IMR-90 (cell line): ENCODE measurements at regions of chr6 and their contacts with region 1.

Region 1: GRCh38 chr6:26045065-26045927 is 41.9 kb upstream of the HFE start:
- DNase-seq: peak; percentile 94
- ATAC-seq: peak; percentile 73
- H3K4me3 ChIP-seq: peak overlapping the region; percentile 63
- H3K27ac ChIP-seq: peak overlapping the region; percentile 51
- H3K4me1 ChIP-seq: no peaks in the 10 kb centered on the region; the same call in 1 of the 2 replicates
- H3K27me3 ChIP-seq: no peaks in the 10 kb centered on the region
- CTCF ChIP-seq: peak; percentile 21; the same call in 1 of the 2 replicates
- POLR2A ChIP-seq: peak; percentile 98
- RAD21 ChIP-seq: no peak

Region 2: GRCh38 chr6:26003102-26003694 is 42.1 kb before region 1 on chr6:
- CTCF ChIA-PET with region 1: no interaction called
- POLR2A ChIA-PET with region 1: no interaction called
- dilution Hi-C with region 1: no loop called
- in situ Hi-C with region 1: no loop called
- intact Hi-C with region 1: no loop called
- DNase-seq: peak; percentile 56
- ATAC-seq: peak; percentile 84
- H3K4me3 ChIP-seq: no peak overlapping the region
- H3K27ac ChIP-seq: no peak overlapping the region
- H3K4me1 ChIP-seq: 0 out of 2 replicates have a peak, but pooled peaks cover 1% of the 10 kb centered on the region
- H3K27me3 ChIP-seq: no peaks in the 10 kb centered on the region
- CTCF ChIP-seq: peak; percentile 78
- POLR2A ChIP-seq: no peak
- RAD21 ChIP-seq: peak; percentile 79

Region 3: DNA sequence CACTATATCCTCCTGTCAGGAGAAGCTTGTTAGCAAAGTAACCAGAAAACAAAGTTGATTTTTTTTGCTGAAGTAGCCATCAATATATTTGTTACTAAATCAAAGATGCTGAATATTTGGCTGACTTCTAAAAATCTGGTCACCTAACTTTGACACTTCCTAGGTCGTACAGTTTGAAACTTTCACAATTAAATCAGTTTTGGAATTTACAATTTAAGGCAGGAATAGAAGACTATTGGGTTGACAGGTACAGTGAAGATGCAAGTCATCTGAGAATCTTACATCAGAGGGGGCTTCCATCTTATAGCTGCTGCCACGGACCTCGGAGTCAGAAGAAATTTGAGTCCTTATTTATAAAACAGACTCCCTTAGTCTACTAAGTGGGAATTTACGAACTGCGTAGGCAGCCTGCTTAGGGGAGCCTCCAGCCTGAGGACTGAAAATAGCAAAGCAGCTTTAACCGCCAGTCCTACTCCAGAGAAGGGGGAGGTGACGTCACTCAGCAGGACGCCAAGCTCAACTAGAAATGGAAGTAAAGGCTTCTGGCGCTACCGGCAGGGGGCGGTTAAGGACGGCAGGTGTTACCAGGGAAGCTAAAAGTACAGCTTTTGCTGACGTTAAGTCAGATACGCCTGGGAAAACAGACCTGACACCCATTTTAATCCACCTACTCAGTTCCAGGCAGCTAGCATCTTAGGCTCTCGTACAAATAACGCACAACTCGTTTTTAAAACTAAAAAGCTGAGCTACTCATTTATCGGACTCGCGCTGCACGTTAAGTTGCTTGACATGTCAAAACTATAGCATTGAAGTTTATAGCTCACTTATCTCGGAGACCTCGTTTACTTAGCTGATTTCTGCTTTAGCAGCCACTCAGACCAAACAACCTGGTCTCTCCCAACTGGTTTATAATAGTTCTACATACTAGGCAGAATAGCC is 19.1 kb before region 1 on chr6:
- CTCF ChIA-PET with region 1: interaction called, 13 read pairs
- POLR2A ChIA-PET with region 1: interaction called, 20 read pairs
- dilution Hi-C with region 1: no loop called
- in situ Hi-C with region 1: no loop called
- intact Hi-C with region 1: no loop called
- DNase-seq: peak; percentile 99
- ATAC-seq: peak; percentile 41
- H3K4me3 ChIP-seq: peak overlapping the region; percentile 68; the same call in 1 of the 2 replicates
- H3K27ac ChIP-seq: peak overlapping the region; percentile 59
- H3K4me1 ChIP-seq: peaks cover 4% of the 10 kb centered on the region
- H3K27me3 ChIP-seq: no peaks in the 10 kb centered on the region
- CTCF ChIP-seq: peak; percentile 96
- POLR2A ChIP-seq: 0 out of 2 replicates have a peak, but pooled peaks have one; percentile 38
- RAD21 ChIP-seq: peak; percentile 72

Region 4: GRCh38 chr6:26087284-26088115 is 42.2 kb after region 1 on chr6 and contains the start of gene HFE:
- CTCF ChIA-PET with region 1: no interaction called
- POLR2A ChIA-PET with region 1: no interaction called
- dilution Hi-C with region 1: no loop called
- in situ Hi-C with region 1: no loop called
- intact Hi-C with region 1: no loop called
- DNase-seq: peak; percentile 68
- ATAC-seq: peak; percentile 86
- H3K4me3 ChIP-seq: peak within 1 kb of the TSS; percentile 71
- H3K27ac ChIP-seq: peak within 1 kb of the TSS; percentile 66
- H3K4me1 ChIP-seq: peaks cover 5% of the 10 kb centered on the region
- H3K27me3 ChIP-seq: no peaks in the 10 kb centered on the region
- CTCF ChIP-seq: no peak
- POLR2A ChIP-seq: no peak
- RAD21 ChIP-seq: no peak
- total RNA-seq, gene HFE: 13.6 and 14.9 TPM in 2 replicates